Activated CD4-positive, alpha-beta memory T cell treated with anti-CD3 and anti-CD28 coated beads for 36 hours (primary cell): ENCODE measurements at regions of chr17 and their contacts with region 1.

Region 1: DNA sequence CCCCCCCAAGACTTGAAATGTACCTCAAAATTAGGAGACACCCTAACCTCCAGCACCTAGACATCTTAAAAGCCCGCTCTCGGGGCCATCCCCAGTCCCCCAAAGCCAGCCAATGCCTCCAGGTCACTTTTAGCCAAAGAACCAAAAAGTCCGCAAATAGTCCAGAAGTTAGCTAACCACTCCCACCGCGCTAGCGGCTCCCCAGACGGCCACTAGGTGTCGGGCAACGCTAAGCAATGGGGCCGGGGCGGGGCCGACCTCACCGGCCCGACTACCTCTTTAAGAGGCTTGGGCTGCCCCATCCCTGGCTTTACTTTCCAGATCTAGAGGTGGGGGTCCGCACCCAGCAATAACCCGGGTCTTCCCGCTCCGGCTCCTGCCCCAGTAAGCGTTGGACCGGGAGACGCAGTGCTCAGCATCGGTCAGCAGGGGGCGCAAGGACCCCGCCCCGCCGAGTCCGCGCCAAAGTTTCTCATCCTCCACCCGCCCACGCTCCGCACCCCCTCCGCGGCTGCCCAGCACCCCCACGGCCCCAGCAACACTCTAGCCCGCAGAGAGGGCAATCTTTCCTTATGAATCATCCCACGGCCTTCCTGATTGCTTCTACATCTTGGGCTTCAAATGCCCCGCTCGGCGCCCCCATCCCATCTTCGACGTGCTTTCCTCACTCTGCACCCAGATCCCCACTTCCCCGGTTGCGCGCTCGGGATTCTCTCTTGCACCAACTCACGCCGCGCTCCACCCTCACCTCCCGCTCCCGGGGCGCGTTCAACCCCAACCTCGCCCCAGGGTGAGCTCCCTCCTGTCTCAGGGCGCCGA is 765 bp downstream of the COL1A1 start:
- DNase-seq: peak; percentile 89
- H3K4me3 Mint-ChIP-seq: peak overlapping the region; percentile 67
- H3K27ac Mint-ChIP-seq: no peak overlapping the region
- H3K4me1 Mint-ChIP-seq: peaks cover 19% of the 10 kb centered on the region
- H3K27me3 Mint-ChIP-seq: peaks cover 49% of the 10 kb centered on the region

Region 2: GRCh38 chr17:50043290-50044148 is 157.1 kb before region 1 on chr17:
- CTCF ChIA-PET with region 1: no interaction called
- POLR2A ChIA-PET with region 1: no interaction called
- intact Hi-C with region 1: no loop called
- DNase-seq: no peak
- H3K4me3 Mint-ChIP-seq: no peak overlapping the region
- H3K27ac Mint-ChIP-seq: no peak overlapping the region
- H3K4me1 Mint-ChIP-seq: peaks cover 13% of the 10 kb centered on the region
- H3K27me3 Mint-ChIP-seq: peaks cover 5% of the 10 kb centered on the region

Region 3: GRCh38 chr17:50094753-50095619 is 105.7 kb before region 1 on chr17 and contains the start of gene PDK2:
- CTCF ChIA-PET with region 1: interaction called, 19 read pairs
- POLR2A ChIA-PET with region 1: no interaction called
- intact Hi-C with region 1: no loop called
- DNase-seq: peak; percentile 97
- H3K4me3 Mint-ChIP-seq: peak within 1 kb of the TSS; percentile 82
- H3K27ac Mint-ChIP-seq: peak within 1 kb of the TSS; percentile 83
- H3K4me1 Mint-ChIP-seq: peaks cover 17% of the 10 kb centered on the region
- H3K27me3 Mint-ChIP-seq: no peaks in the 10 kb centered on the region
- total RNA-seq, gene PDK2: 13.3 to 14.6 TPM

Region 4: GRCh38 chr17:50151041-50151936 is 49.4 kb before region 1 on chr17:
- CTCF ChIA-PET with region 1: interaction called, 10 read pairs
- POLR2A ChIA-PET with region 1: no interaction called
- intact Hi-C with region 1: no loop called
- DNase-seq: peak; percentile 94
- H3K4me3 Mint-ChIP-seq: peak overlapping the region; percentile 87
- H3K27ac Mint-ChIP-seq: peak overlapping the region; percentile 97
- H3K4me1 Mint-ChIP-seq: peaks cover 38% of the 10 kb centered on the region
- H3K27me3 Mint-ChIP-seq: no peaks in the 10 kb centered on the region

Region 5: GRCh38 chr17:50213026-50214022 is 12.7 kb after region 1 on chr17:
- CTCF ChIA-PET with region 1: interaction called, 70 read pairs
- POLR2A ChIA-PET with region 1: interaction called, 3 read pairs
- intact Hi-C with region 1: no loop called
- DNase-seq: peak; percentile 85
- H3K4me3 Mint-ChIP-seq: no peak overlapping the region
- H3K27ac Mint-ChIP-seq: no peak overlapping the region
- H3K4me1 Mint-ChIP-seq: peaks cover 18% of the 10 kb centered on the region
- H3K27me3 Mint-ChIP-seq: peaks cover 13% of the 10 kb centered on the region

Region 6: GRCh38 chr17:50283246-50283645 is 82.6 kb after region 1 on chr17:
- CTCF ChIA-PET with region 1: interaction called, 324 read pairs
- POLR2A ChIA-PET with region 1: no interaction called
- intact Hi-C with region 1: no loop called
- DNase-seq: peak; percentile 80
- H3K4me3 Mint-ChIP-seq: peak overlapping the region; percentile 0
- H3K27ac Mint-ChIP-seq: peak overlapping the region; percentile 43
- H3K4me1 Mint-ChIP-seq: peaks cover 23% of the 10 kb centered on the region
- H3K27me3 Mint-ChIP-seq: peaks cover 38% of the 10 kb centered on the region

Region 7: GRCh38 chr17:50345432-50346312 is 145.0 kb after region 1 on chr17 and contains the start of gene XYLT2:
- CTCF ChIA-PET with region 1: interaction called, 10 read pairs
- POLR2A ChIA-PET with region 1: no interaction called
- intact Hi-C with region 1: no loop called
- DNase-seq: peak; percentile 92
- H3K4me3 Mint-ChIP-seq: peak within 1 kb of the TSS; percentile 91
- H3K27ac Mint-ChIP-seq: peak within 1 kb of the TSS; percentile 91
- H3K4me1 Mint-ChIP-seq: peaks cover 38% of the 10 kb centered on the region
- H3K27me3 Mint-ChIP-seq: no peaks in the 10 kb centered on the region
- total RNA-seq, gene XYLT2: 41.3 to 43.3 TPM

Region 8: GRCh38 chr17:50478391-50479381 is 278.0 kb after region 1 on chr17 and contains the start of gene RSAD1:
- CTCF ChIA-PET with region 1: interaction called, 7 read pairs
- POLR2A ChIA-PET with region 1: no interaction called
- intact Hi-C with region 1: loop called (anchors 2 kb)
- DNase-seq: peak; percentile 92
- H3K4me3 Mint-ChIP-seq: peak within 1 kb of the TSS; percentile 84
- H3K27ac Mint-ChIP-seq: peak within 1 kb of the TSS; percentile 87
- H3K4me1 Mint-ChIP-seq: peaks cover 24% of the 10 kb centered on the region
- H3K27me3 Mint-ChIP-seq: no peaks in the 10 kb centered on the region
- total RNA-seq, gene RSAD1: 31.9 to 37.2 TPM